ENCODE measurements at regions of chr10 and their contacts with region 1.

Region 1: DNA sequence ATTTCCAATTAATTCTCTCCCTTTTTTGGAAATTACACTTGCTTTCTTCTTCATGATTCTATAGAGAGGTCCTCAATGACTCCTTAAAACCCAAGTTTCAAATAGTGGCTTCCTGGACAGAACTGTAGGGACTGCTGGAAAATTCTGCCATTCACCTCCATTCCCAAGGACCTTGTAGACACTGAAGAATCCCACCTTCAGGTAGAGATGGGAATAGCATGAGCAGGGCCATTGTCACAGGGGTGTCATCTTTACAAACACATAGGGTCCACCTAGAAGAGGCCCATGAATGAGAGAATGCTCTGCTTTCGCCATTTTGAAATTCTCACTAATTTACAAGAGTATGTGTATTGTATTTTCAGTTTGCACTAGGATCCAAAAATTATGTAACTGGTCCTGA is 701.7 kb upstream of the CELF2 start:
- DNase-seq: no peak
- H3K4me3 ChIP-seq: no peak overlapping the region
- H3K27ac ChIP-seq: no peak overlapping the region
- H3K4me1 ChIP-seq: no peaks in the 10 kb centered on the region
- H3K27me3 ChIP-seq: no peaks in the 10 kb centered on the region
- CTCF ChIP-seq: no peak
- POLR2A ChIP-seq: no peak

Region 2: DNA sequence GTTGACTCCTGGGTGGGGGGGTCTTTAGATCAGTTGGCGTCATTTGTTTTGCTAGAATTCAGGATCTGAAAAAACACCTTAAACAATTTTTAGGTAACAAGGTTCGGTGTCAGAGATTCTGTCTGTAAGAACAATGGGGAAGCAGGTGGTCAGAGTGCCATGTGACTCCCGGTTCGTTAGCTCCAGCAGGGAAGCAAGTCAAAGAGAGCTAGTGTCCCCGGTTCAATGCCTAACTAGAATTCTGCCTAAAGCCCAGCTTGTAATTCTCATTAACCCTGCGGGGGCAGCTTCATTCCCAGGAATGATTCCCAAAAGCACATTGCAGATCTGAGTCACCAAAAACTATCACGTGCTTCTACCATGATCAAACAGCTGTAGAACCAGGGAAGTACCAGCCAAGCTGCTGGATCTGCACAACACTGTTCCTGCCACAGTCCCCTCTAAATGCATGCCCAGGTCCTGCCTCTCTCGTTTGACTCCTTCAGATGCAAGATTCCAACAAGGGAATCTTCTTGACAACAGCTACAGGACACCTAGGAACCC is 37.4 kb after region 1 on chr10:
- intact Hi-C with region 1: loop called (anchors 2 kb)
- DNase-seq: no peak
- H3K4me3 ChIP-seq: no peak overlapping the region
- H3K27ac ChIP-seq: no peak overlapping the region
- H3K4me1 ChIP-seq: no peaks in the 10 kb centered on the region
- H3K27me3 ChIP-seq: no peaks in the 10 kb centered on the region
- CTCF ChIP-seq: no peak
- POLR2A ChIP-seq: no peak

Measured in breast epithelium (tissue), 4 donors.